Activated CD4-positive, alpha-beta memory T cell treated with anti-CD3 and anti-CD28 coated beads for 36 hours (primary cell): ENCODE measurements at regions of chr6 and their contacts with region 1.

Region 1: DNA sequence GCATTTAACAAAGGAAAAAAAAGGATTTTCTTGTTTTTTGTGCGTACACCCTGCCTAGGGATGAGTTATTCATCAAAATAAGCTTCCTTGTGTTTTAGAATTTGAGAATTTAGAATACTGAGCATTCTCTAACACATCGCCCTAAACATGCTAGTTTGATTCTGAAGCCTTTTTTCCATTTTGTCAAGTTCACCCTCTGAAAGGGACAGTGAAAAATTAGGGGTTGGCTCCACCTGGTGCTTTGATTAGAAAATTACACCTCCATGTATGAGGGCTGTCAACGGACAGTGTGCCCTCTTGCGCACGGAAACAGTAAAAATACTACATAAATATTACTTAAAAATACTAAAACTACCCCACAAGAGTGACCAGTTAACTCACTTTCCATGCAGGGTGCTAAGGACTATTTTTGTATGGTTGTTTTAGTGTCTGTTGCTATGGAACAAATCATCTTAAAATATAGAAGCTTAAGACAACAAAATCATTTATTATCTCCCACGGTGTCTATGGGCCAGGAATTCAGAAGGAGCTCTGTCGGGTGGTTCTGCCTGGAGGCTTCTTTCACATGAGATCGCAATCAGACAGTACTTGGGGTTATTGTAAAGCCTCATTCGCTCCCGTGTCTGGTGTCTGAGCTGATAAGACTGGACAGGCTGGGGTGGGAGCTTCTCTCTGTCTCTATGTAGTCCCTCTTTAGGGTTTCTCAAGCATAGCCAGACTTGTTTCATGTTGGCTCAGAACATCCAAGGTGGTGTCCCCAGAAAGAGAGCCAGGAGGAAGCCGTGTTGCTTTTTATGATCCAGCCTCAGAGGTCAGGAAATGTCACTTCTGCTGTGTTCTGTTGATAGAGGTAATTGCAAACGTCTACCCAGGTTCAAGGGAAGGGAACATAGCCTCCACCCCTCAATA is 41.1 kb upstream of the TMEM170B start:
- DNase-seq: peak; percentile 74
- H3K4me3 Mint-ChIP-seq: no peak overlapping the region
- H3K27ac Mint-ChIP-seq: no peak overlapping the region
- H3K4me1 Mint-ChIP-seq: peaks cover 5% of the 10 kb centered on the region
- H3K27me3 Mint-ChIP-seq: no peaks in the 10 kb centered on the region

Region 2: GRCh38 chr6:10954590-10955010 is 541.8 kb before region 1 on chr6:
- CTCF ChIA-PET with region 1: interaction called, 20 read pairs
- POLR2A ChIA-PET with region 1: no interaction called
- intact Hi-C with region 1: loop called (anchors 1 kb)
- DNase-seq: peak; percentile 83
- H3K4me3 Mint-ChIP-seq: no peak overlapping the region
- H3K27ac Mint-ChIP-seq: no peak overlapping the region
- H3K4me1 Mint-ChIP-seq: no peaks in the 10 kb centered on the region
- H3K27me3 Mint-ChIP-seq: peaks cover 12% of the 10 kb centered on the region

Region 3: DNA sequence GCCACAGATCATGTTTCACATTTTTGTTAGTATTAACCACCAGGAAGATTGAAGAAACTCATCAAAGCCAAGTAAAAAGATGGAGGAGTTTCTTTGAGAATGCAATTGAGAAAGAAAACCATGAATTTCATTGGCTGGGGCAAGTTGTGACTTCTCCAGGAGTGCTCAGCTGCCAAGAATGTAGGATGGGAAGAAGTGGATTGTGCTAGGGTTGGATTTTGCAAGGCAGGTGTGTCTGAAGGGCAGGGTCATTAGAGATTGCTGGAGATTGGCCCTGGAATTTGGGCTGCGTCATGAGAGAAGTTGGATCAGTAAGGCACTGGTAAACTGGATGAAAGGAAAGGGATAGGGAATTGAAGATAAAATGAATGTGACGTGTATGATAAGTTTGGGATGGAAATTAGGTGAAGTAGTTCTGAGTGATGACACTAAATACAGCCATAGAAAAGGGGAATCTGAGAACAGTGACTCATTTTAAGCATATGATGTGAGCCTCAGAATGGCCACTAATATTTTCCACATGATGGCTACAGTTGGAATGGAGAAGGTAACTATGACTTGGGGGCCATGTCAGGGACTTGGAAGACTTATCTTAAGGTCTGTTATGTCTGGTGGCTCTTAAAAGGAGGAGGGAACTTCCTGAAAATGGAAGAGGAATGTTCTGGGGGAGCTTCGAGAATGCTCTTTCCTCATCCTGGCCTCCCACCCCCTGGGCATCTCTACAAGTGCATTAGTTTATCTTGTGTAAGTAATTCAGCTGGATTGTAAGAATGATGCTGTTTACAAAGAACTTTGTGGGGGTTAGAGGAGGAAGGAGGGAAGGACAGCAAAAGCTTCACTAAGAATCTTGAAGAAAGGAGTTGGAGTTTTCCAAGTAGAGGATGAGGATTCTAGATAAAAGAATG is 357.1 kb before region 1 on chr6:
- CTCF ChIA-PET with region 1: interaction called, 131 read pairs
- POLR2A ChIA-PET with region 1: interaction called, 3 read pairs
- intact Hi-C with region 1: loop called (anchors 1 kb)
- DNase-seq: no peak
- H3K4me3 Mint-ChIP-seq: no peak overlapping the region
- H3K27ac Mint-ChIP-seq: no peak overlapping the region
- H3K4me1 Mint-ChIP-seq: peaks cover 14% of the 10 kb centered on the region
- H3K27me3 Mint-ChIP-seq: no peaks in the 10 kb centered on the region

Region 4: DNA sequence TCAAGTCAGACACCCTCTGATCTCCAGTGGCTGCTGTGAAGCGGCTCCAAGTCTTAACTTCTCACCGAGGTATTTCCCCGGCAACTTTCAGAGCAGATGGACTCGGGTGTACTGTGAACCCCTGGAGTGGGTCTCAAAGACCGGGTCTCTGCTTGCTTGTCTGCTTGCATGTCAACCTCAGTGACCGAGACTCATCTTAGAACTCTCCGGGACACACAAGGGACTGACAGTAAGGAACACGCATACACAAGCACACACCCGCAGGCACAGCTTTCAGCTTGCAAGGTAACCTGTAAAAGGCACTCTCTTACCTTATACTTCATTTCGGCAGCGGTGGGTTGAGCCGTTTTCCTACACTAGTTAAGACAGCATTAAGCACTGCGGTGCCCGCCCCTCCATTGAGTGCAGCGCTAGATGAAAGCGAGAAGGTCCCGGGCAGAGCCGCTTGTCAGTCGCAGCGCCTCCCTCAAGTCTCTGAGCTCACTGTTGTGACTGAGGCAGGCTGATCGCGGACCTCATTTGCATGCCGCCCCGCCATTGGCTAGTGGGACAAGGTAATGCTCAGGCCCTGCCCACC is 264.1 kb before region 1 on chr6 and contains the start of gene NEDD9:
- CTCF ChIA-PET with region 1: interaction called, 15 read pairs
- POLR2A ChIA-PET with region 1: no interaction called
- intact Hi-C with region 1: loop called (anchors 1 kb)
- DNase-seq: peak; percentile 98
- H3K4me3 Mint-ChIP-seq: peak within 1 kb of the TSS; percentile 81
- H3K27ac Mint-ChIP-seq: peak within 1 kb of the TSS; percentile 96
- H3K4me1 Mint-ChIP-seq: peaks cover 65% of the 10 kb centered on the region
- H3K27me3 Mint-ChIP-seq: no peaks in the 10 kb centered on the region
- total RNA-seq, gene NEDD9: 26.6 to 31.5 TPM

Region 5: DNA sequence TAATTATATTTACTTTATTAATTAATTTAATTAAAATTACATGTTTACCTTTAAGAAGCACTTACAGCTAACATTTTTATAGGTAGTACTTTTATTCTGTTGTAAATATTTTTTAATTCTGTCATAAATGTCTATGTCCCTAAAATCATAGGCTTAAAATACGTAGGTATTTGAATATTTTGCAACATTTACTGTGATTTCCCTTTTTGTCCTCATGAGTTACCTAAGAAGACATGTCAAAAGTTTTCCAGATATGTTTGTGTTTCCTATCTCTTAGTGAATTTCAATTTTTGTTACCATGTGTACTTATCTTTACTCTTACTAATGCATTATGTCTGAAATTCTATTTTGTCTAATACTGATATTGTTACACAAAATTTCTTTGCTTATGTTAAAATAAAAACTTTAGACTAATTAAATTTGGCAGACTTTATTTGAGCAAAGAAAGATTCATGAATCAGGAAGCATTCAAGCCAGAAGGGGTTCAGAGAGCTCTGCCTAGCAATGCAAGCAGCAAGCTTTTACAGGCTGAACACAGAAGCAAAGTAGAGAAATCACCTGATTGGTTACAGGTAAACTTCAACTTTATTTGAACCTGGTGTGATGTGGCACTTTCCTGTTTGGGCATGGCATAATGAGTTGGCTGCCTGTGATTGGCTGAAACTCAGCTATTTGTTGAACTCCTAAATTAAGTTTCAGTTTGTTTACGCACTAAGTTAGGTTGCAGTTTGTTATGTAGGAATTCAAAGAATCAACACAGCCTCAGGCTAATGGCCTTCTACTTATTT is 82.0 kb before region 1 on chr6:
- CTCF ChIA-PET with region 1: interaction called, 12 read pairs
- POLR2A ChIA-PET with region 1: no interaction called
- intact Hi-C with region 1: no loop called
- DNase-seq: peak; percentile 63
- H3K4me3 Mint-ChIP-seq: no peak overlapping the region
- H3K27ac Mint-ChIP-seq: no peak overlapping the region
- H3K4me1 Mint-ChIP-seq: peaks cover 48% of the 10 kb centered on the region
- H3K27me3 Mint-ChIP-seq: no peaks in the 10 kb centered on the region

Region 6: DNA sequence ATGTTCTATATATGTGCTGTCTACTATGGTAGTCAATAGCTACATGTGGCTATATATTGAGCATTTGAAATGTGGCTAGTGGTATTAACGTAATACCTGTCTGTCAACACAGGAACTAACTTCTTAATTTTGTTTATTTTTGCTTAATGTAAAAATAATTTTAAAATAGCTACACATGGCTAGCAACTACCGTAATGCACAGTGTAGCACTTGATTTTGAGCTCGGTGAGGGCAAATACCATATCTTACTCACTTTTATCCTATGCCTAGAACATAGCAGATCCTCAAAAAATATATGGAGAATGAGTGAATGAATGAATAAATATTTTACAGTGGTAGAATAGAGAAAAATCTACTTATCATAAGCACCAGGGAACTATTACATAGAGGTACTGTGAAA is 13.1 kb after region 1 on chr6:
- CTCF ChIA-PET with region 1: interaction called, 11 read pairs
- POLR2A ChIA-PET with region 1: no interaction called
- intact Hi-C with region 1: no loop called
- DNase-seq: no peak
- H3K4me3 Mint-ChIP-seq: no peak overlapping the region
- H3K27ac Mint-ChIP-seq: no peak overlapping the region
- H3K4me1 Mint-ChIP-seq: no peaks in the 10 kb centered on the region
- H3K27me3 Mint-ChIP-seq: peaks cover 21% of the 10 kb centered on the region